ENCODE measurements at regions of chr12 and their contacts with region 1.

Region 1: GRCh38 chr12:452667-453210 is 7.0 kb upstream of the B4GALNT3 start:
- DNase-seq: no peak
- ATAC-seq: no peak
- H3K4me3 ChIP-seq: no peak overlapping the region
- H3K27ac ChIP-seq: no peak overlapping the region
- H3K4me1 ChIP-seq: no peaks in the 10 kb centered on the region
- H3K27me3 ChIP-seq: peaks cover 48% of the 10 kb centered on the region
- CTCF ChIP-seq: no peak
- POLR2A ChIP-seq: no peak
- RAD21 ChIP-seq: no peak

Region 2: GRCh38 chr12:117816-118345 is 334.9 kb before region 1 on chr12:
- CTCF ChIA-PET with region 1: no interaction called
- POLR2A ChIA-PET with region 1: no interaction called
- dilution Hi-C with region 1: no loop called
- in situ Hi-C with region 1: no loop called
- intact Hi-C with region 1: no loop called
- DNase-seq: no peak
- ATAC-seq: no peak
- H3K4me3 ChIP-seq: no peak overlapping the region
- H3K27ac ChIP-seq: no peak overlapping the region
- H3K4me1 ChIP-seq: no peaks in the 10 kb centered on the region
- H3K27me3 ChIP-seq: peaks cover 61% of the 10 kb centered on the region
- CTCF ChIP-seq: no peak
- POLR2A ChIP-seq: no peak
- RAD21 ChIP-seq: no peak

Region 3: DNA sequence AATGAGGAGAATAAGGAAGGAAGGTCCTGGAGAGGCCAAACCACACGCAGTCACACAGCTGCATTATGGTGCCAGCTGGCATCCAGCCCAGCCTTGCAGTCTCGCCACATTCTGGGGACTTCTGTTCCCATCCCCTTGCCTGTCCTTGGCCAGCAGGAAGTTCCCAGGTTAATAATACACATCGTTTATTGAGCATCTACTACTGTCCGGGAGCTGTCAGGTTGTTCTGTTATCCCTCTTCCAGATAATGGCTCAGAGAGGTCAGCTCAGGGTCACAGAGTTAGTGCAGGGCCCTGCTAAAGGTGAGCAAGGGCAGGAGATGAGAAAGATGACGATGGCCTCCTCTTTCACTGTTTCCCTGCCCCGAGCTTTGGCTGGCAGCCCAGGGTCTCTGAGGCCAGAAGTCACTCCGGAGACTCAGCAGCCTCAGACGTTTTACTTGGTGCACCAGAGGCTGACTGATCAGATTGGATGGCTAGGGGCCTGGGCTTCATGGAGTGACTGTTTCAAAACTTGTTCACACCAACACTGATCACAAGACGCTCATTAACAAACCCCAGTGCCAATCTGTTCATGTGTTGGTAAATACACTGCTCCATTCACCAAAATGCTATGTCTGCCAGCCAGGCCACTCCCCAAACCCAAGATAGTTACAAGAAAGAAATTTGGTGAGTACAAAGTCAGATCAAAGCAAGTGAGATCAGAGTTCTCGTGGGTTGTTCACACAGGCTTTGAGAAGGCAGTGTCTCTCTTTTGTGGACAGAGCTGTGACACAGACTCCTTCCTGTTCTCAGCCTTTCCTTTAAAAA is 86.2 kb after region 1 on chr12:
- CTCF ChIA-PET with region 1: interaction called, 5 read pairs
- POLR2A ChIA-PET with region 1: no interaction called
- dilution Hi-C with region 1: no loop called
- in situ Hi-C with region 1: loop called (anchors 5 kb)
- intact Hi-C with region 1: no loop called
- DNase-seq: peak; percentile 42
- ATAC-seq: no peak; the same call in 1 of the 2 replicates
- H3K4me3 ChIP-seq: no peak overlapping the region
- H3K27ac ChIP-seq: no peak overlapping the region
- H3K4me1 ChIP-seq: no peaks in the 10 kb centered on the region
- H3K27me3 ChIP-seq: peaks cover 45% of the 10 kb centered on the region
- CTCF ChIP-seq: no peak
- POLR2A ChIP-seq: no peak
- RAD21 ChIP-seq: no peak

Region 4: GRCh38 chr12:779745-780734 is 327.3 kb after region 1 on chr12:
- CTCF ChIA-PET with region 1: no interaction called
- POLR2A ChIA-PET with region 1: no interaction called
- dilution Hi-C with region 1: no loop called
- in situ Hi-C with region 1: no loop called
- intact Hi-C with region 1: no loop called
- DNase-seq: peak; percentile 74
- ATAC-seq: peak; percentile 86
- H3K4me3 ChIP-seq: no peak overlapping the region; the same call in 1 of the 2 replicates
- H3K27ac ChIP-seq: peak overlapping the region; percentile 74
- H3K4me1 ChIP-seq: peaks cover 3% of the 10 kb centered on the region; the same call in 1 of the 2 replicates
- H3K27me3 ChIP-seq: no peaks in the 10 kb centered on the region
- CTCF ChIP-seq: no peak
- POLR2A ChIP-seq: no peak
- RAD21 ChIP-seq: no peak